Motor neuron (in vitro differentiated cells): ENCODE measurements at regions of chr9 and their contacts with region 1.

Region 1: DNA sequence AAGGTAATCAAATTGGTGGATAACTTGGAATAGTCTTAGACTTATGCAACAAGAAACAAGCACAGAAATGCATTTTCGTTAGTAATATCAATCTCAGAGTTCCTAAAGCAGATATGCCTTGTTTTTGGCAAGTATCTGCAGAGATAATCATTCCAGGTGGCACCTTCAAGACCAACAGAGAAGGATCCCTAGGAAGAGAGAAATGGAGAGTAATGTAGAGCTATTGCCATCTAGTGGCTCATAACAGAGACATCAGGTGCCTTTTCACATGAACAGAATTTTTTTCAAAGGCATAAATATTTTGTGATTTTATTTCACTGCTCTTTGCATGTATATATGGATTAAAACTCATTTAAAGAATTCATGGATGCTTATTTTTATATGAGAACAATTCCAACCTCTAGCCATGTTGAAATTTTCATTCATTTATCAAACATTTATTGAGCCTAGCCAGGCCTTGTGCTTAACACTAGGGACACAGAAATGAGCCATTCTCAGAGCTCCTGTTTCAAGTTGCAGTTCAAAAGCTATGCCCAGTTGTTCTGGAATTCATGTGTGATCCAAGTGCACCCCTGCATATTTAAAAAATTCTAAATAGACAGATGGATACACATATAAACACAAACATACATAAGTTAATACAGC is 117.5 kb upstream of the OR13F1 start:
- ATAC-seq: peak; percentile 46 to 84 (median 72)
- H3K4me3 ChIP-seq: no peak overlapping the region
- H3K27ac ChIP-seq: no peak overlapping the region
- H3K4me1 ChIP-seq: peaks cover 0 to 4% of the 10 kb centered on the region in 2 donors

Region 2: GRCh38 chr9:104177003-104177611 is 209.4 kb before region 1 on chr9:
- in situ Hi-C with region 1: loop called in 2 of 9 experiments (anchors 25 kb)
- ATAC-seq: peak in 2 of 8 experiments; percentile 25 to 38
- H3K4me3 ChIP-seq: no peak overlapping the region
- H3K27ac ChIP-seq: no peak overlapping the region
- H3K4me1 ChIP-seq: peaks cover 0 to 5% of the 10 kb centered on the region in 2 donors

Region 3: DNA sequence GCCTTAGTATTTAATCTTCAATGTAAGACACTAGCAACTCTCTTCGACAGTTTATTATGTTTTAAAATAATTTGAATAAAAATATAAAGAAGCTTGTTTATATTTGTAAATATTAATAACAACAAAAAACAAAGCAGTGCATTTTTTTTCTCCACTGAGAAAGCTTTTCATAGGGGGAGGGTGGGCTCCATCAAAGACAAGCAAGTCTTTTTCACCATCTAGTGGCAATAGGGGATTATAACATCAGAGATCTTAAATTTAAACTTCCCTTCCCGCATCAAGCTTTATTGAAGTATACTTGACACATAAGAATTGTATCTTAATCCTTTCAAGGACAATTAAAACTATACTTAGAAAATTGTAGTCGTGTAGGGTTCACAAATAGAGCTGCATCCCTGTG is 108.3 kb after region 1 on chr9:
- in situ Hi-C with region 1: loop called in 1 of 9 experiments (anchors 25 kb)
- ATAC-seq: peak in 2 of 8 experiments; percentile 16 to 44
- H3K4me3 ChIP-seq: no peak overlapping the region
- H3K27ac ChIP-seq: no peak overlapping the region
- H3K4me1 ChIP-seq: no peaks in the 10 kb centered on the region